Left ventricle myocardium inferior (tissue), 1 donor: ENCODE measurements at regions of chr13 and their contacts with region 1.

Region 1: DNA sequence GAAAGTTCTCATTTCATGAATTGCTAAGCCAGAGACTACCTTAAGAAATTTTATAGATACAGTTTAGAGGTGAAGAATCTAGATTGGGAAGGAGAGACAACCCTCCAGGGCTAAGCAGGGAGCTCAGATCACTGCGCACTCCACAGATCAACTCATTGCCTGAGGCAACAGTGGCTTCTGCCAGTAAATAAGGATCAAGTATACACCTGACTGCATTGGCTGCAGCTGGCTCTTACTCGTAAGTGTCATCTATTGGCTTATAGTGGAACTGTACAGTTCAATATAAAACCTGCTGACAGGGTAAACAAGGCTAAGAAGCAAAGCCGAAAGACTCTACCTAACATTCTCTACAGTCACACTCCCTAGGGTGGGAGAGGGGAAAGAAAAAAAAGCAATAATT is 18.0 kb upstream of the C1QTNF9B start:
- DNase-seq: no peak
- H3K4me3 ChIP-seq: no peak overlapping the region
- H3K27ac ChIP-seq: no peak overlapping the region
- H3K4me1 ChIP-seq: no peaks in the 10 kb centered on the region
- H3K27me3 ChIP-seq: peaks cover 44% of the 10 kb centered on the region
- CTCF ChIP-seq: no peak

Region 2: GRCh38 chr13:24039621-24040475 is 124.5 kb after region 1 on chr13:
- intact Hi-C with region 1: loop called (anchors 10 kb)
- DNase-seq: no peak
- H3K4me3 ChIP-seq: no peak overlapping the region
- H3K27ac ChIP-seq: no peak overlapping the region
- H3K4me1 ChIP-seq: peaks cover 5% of the 10 kb centered on the region
- H3K27me3 ChIP-seq: no peaks in the 10 kb centered on the region
- CTCF ChIP-seq: no peak